ENCODE measurements at regions of chr20 and their contacts with region 1.

Region 1: GRCh38 chr20:64101731-64102621 is 5.4 kb downstream of the NPBWR2 start:
- DNase-seq: peak; percentile 21
- H3K4me3 ChIP-seq: no peak overlapping the region
- H3K27ac ChIP-seq: no peak overlapping the region
- H3K4me1 ChIP-seq: no peaks in the 10 kb centered on the region
- H3K27me3 ChIP-seq: peaks cover 19 to 22% of the 10 kb centered on the region in 2 experiments
- CTCF ChIP-seq: peak; percentile 78 to 86
- POLR2A ChIP-seq: no peak

Region 2: DNA sequence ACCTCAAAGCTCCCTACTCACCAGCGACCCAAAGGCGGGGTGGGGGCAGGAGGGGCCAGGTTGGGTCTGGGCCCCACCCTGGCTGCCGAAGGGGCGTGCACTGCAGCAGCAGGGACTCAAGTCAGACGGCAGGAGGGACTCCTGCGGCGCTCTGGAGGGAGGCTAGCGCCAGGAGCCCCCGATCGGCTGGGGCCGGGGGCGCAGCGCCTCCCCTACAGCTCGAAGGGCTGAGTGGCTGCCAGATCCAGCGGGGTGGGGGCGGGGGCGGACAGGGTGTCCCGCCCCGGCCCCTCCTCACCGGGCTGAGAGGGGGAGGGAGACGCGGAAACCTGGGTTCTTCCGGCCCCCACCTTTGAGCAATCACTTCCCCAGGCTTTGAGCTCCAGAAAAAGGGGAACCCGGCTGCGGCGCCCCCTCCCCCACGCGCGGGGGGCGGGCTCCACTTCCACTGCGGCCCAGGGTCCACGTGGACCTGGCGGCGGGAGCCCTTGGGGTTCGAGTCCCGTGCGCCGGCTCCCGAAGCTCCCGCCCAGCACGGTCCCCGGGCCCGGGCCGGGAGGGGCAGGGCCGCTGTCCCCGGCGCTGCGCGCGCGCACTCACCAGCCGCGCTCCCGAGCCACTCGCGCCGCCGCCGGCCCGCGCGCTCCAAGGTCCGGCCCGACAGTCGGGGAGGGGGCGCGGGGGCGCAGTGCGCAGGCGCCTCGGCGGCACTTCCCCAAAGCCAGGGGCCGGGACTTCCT is 22.5 kb before region 1 on chr20 and contains the start of gene RGS19:
- CTCF ChIA-PET with region 1: interaction called, 18 read pairs
- POLR2A ChIA-PET with region 1: no interaction called
- dilution Hi-C with region 1: no loop called
- intact Hi-C with region 1: loop called (anchors 1 kb)
- DNase-seq: peak; percentile 57
- H3K4me3 ChIP-seq: peak within 1 kb of the TSS; percentile 71 to 94 (median 73)
- H3K27ac ChIP-seq: no peak within 1 kb of the TSS
- H3K4me1 ChIP-seq: peaks cover 20% of the 10 kb centered on the region
- H3K27me3 ChIP-seq: peaks cover 2 to 7% of the 10 kb centered on the region in 2 experiments
- CTCF ChIP-seq: no peak
- POLR2A ChIP-seq: peak; percentile 16
- total RNA-seq, gene RGS19: 27.8 and 28.3 TPM in 2 replicates

Region 3: DNA sequence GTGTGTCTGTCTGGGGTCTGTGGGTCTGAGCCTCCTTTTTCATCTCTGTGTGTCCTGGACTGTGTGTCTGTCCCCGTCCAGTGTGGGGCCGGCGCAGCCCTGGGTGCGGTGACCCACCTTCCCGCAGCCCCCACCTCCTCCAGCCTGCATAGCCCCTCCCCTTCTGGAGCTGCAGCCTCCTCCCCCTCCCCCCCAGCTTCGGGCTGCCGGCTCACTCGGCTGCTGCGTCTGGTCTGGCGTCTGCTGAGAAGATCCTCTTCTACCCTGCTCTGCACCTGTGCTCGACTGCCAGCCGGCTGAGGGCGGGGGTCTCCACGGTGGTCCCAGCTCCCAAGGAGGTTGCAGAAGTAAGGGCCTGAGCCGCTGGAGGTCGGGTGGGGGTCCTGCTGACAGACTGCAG is 10.2 kb before region 1 on chr20:
- CTCF ChIA-PET with region 1: interaction called, 11 read pairs
- POLR2A ChIA-PET with region 1: no interaction called
- dilution Hi-C with region 1: no loop called
- intact Hi-C with region 1: no loop called
- DNase-seq: no peak
- H3K4me3 ChIP-seq: no peak overlapping the region
- H3K27ac ChIP-seq: no peak overlapping the region
- H3K4me1 ChIP-seq: no peaks in the 10 kb centered on the region
- H3K27me3 ChIP-seq: peaks cover 2% of the 10 kb centered on the region in 2 experiments
- CTCF ChIP-seq: no peak
- POLR2A ChIP-seq: no peak